ENCODE measurements at regions of chr16 and their contacts with region 1.

Region 1: GRCh38 chr16:53099318-53100130 is 44.7 kb downstream of the CHD9 start:
- DNase-seq: peak; percentile 51 to 93 (median 89)
- H3K4me3 ChIP-seq: peak overlapping the region; percentile 21 to 77 (median 63)
- H3K27ac ChIP-seq: peak overlapping the region; percentile 80 to 90
- H3K4me1 ChIP-seq: peaks cover 10 to 40% (median 36%) of the 10 kb centered on the region in 4 experiments
- H3K27me3 ChIP-seq: no peaks in the 10 kb centered on the region

Region 2: GRCh38 chr16:53080345-53081031 is 19.0 kb before region 1 on chr16:
- CTCF ChIA-PET with region 1: interaction called, 54 read pairs
- POLR2A ChIA-PET with region 1: interaction called, 10 read pairs
- DNase-seq: no peak
- H3K4me3 ChIP-seq: no peak overlapping the region
- H3K27ac ChIP-seq: no peak overlapping the region
- H3K4me1 ChIP-seq: peaks cover 2 to 6% (median 4%) of the 10 kb centered on the region in 4 experiments
- H3K27me3 ChIP-seq: no peaks in the 10 kb centered on the region

Region 3: GRCh38 chr16:53130159-53131049 is 30.9 kb after region 1 on chr16:
- CTCF ChIA-PET with region 1: interaction called, 23 read pairs
- POLR2A ChIA-PET with region 1: interaction called, 10 read pairs
- DNase-seq: peak; percentile 95 to 98 (median 97)
- H3K4me3 ChIP-seq: peak overlapping the region; percentile 70 to 94 (median 89)
- H3K27ac ChIP-seq: peak overlapping the region; percentile 68 to 87
- H3K4me1 ChIP-seq: peaks cover 3 to 16% (median 12%) of the 10 kb centered on the region in 4 experiments
- H3K27me3 ChIP-seq: no peaks in the 10 kb centered on the region